HAP-1 (cell line): ENCODE measurements at regions of chr6 and their contacts with region 1.

Region 1: GRCh38 chr6:37051138-37052026 is 45.9 kb downstream of the FGD2 start:
- DNase-seq: peak; percentile 66 to 94
- H3K4me3 ChIP-seq: no peak overlapping the region
- H3K4me1 ChIP-seq: peaks cover 7% of the 10 kb centered on the region
- H3K27me3 ChIP-seq: no peaks in the 10 kb centered on the region

Region 2: GRCh38 chr6:37169496-37170272 is 118.3 kb after region 1 on chr6 and contains the start of gene PIM1:
- in situ Hi-C with region 1: loop called (anchors 5 kb)
- DNase-seq: peak; percentile 94 to 100
- H3K4me3 ChIP-seq: peak within 1 kb of the TSS; percentile 95
- H3K4me1 ChIP-seq: peaks cover 16% of the 10 kb centered on the region
- H3K27me3 ChIP-seq: no peaks in the 10 kb centered on the region

Region 3: GRCh38 chr6:37365762-37366161 is 314.4 kb after region 1 on chr6:
- in situ Hi-C with region 1: no loop called
- DNase-seq: peak in 1 of 2 experiments; percentile 25
- H3K4me3 ChIP-seq: no peak overlapping the region
- H3K4me1 ChIP-seq: no peaks in the 10 kb centered on the region
- H3K27me3 ChIP-seq: no peaks in the 10 kb centered on the region